Sigmoid colon (tissue), 7 donors: ENCODE measurements at regions of chr3 and their contacts with region 1.

Region 1: GRCh38 chr3:186259612-186260383 is 102.2 kb downstream of the DGKG start:
- DNase-seq: peak; percentile 78
- H3K4me3 ChIP-seq: no peak overlapping the region
- H3K27ac ChIP-seq: peak overlapping the region in 1 of 4 donors; percentile 68
- H3K4me1 ChIP-seq: peaks cover 0 to 16% (median 7%) of the 10 kb centered on the region in 4 donors
- H3K27me3 ChIP-seq: no peaks in the 10 kb centered on the region
- CTCF ChIP-seq: peak; percentile 58 to 91 (median 73)
- EP300 ChIP-seq: no peak
- POLR2A ChIP-seq: no peak

Region 2: GRCh38 chr3:186013312-186013711 is 246.5 kb before region 1 on chr3:
- intact Hi-C with region 1: no loop called
- DNase-seq: no peak
- H3K4me3 ChIP-seq: no peak overlapping the region
- H3K27ac ChIP-seq: no peak overlapping the region
- H3K4me1 ChIP-seq: no peaks in the 10 kb centered on the region
- H3K27me3 ChIP-seq: no peaks in the 10 kb centered on the region
- CTCF ChIP-seq: no peak
- EP300 ChIP-seq: no peak
- POLR2A ChIP-seq: no peak

Region 3: DNA sequence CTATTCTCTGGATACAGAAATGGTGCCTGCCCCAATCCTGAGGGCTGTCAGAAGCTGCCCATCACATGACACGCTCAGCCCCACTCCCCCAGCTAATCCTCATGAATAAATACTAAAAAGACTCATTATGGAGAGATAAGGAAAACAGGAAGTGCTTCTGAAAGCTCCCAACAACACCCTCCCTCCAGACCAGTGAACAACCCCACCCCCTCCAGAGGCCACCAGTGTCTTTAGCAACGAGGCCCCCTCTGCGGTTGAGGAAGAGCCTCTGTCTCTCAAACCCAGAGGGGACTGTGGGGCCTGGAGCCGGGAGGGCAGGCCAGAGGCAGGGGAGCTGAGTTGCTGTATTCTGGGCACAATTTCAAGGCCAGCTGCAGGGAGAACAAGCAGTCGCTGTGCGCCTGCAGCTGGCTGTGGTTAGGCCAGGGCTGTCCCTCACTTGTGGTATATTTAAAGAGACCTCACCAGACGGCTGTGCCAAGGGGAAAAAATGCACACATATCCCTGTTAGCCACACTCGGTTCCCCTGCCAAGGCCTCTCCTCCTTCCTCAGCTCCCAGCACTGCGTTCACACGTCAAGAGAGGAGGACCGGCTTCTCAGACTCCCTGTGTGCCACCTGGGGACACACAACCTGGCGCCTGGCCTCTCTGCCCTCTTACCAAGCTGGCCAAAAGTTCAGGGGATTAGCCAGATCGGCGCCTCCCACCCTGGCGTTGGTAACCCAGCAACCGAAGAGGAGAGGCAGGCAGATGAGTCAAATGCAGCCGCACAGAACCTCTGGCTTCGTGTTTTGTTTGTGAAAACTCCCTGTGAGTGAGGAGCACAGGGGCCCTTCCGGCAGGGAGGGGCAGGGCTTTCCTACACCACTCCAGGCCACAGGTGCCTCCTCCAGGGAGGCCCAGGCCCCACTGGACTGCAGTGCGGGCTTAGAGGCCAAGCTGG is 49.7 kb before region 1 on chr3:
- intact Hi-C with region 1: no loop called
- DNase-seq: peak; percentile 70
- H3K4me3 ChIP-seq: no peak overlapping the region
- H3K27ac ChIP-seq: peak overlapping the region; percentile 39 to 69 (median 58)
- H3K4me1 ChIP-seq: peaks cover 0 to 33% (median 21%) of the 10 kb centered on the region in 4 donors
- H3K27me3 ChIP-seq: no peaks in the 10 kb centered on the region
- CTCF ChIP-seq: no peak
- EP300 ChIP-seq: no peak
- POLR2A ChIP-seq: no peak

Region 4: GRCh38 chr3:186320862-186321568 is 61.2 kb after region 1 on chr3:
- intact Hi-C with region 1: no loop called
- DNase-seq: no peak
- H3K4me3 ChIP-seq: no peak overlapping the region
- H3K27ac ChIP-seq: peak overlapping the region in 1 of 4 donors; percentile 6
- H3K4me1 ChIP-seq: no peaks in the 10 kb centered on the region
- H3K27me3 ChIP-seq: no peaks in the 10 kb centered on the region
- CTCF ChIP-seq: no peak
- EP300 ChIP-seq: no peak
- POLR2A ChIP-seq: no peak

Region 5: GRCh38 chr3:186540221-186540834 is 280.5 kb after region 1 on chr3:
- intact Hi-C with region 1: loop called (anchors 1 kb)
- DNase-seq: peak; percentile 82
- H3K4me3 ChIP-seq: peak overlapping the region in 2 of 4 donors; percentile 23 to 25
- H3K27ac ChIP-seq: peak overlapping the region in 1 of 4 donors; percentile 21
- H3K4me1 ChIP-seq: peaks cover 0 to 7% (median 4%) of the 10 kb centered on the region in 4 donors
- H3K27me3 ChIP-seq: no peaks in the 10 kb centered on the region
- CTCF ChIP-seq: peak; percentile 62 to 73 (median 66)
- EP300 ChIP-seq: no peak
- POLR2A ChIP-seq: no peak

Region 6: DNA sequence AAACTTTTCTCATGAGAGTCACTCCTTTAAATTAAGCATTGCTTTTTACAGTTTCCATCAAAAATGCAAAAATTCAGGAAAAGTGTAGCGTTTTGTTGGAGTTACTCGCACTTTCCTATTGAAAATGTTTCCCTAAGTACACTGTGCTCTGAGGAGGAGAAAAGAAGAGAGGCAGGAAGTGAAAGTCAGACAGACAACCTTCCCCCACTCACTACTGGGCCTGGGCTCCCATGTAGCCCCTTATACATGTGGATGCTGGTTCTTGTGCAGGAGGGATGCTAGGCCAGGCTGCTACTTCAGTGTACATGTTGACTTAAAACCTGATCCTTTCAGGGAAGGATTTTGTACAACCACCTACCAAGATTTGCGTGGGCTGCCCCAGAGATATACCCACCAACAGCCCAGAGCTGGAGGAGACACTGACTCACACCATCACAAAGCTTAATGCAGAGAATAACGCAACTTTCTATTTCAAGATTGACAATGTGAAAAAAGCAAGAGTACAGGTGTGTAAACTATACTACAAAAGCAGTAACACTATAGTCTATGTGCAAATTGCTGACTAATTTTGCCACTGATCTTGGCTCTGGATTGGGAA is 472.5 kb after region 1 on chr3:
- intact Hi-C with region 1: no loop called
- DNase-seq: no peak
- H3K4me3 ChIP-seq: no peak overlapping the region
- H3K27ac ChIP-seq: no peak overlapping the region
- H3K4me1 ChIP-seq: no peaks in the 10 kb centered on the region
- H3K27me3 ChIP-seq: no peaks in the 10 kb centered on the region
- CTCF ChIP-seq: no peak
- EP300 ChIP-seq: no peak
- POLR2A ChIP-seq: no peak